ENCODE measurements at regions of chr15 and their contacts with region 1.

Region 1: GRCh38 chr15:36883713-36884517 is 216.4 kb downstream of the MEIS2 start:
- H3K4me3 ChIP-seq: no peak overlapping the region; the same call in 1 of the 2 replicates
- H3K27ac ChIP-seq: no peak overlapping the region
- H3K4me1 ChIP-seq: no peaks in the 10 kb centered on the region
- CTCF ChIP-seq: peak; percentile 68

Region 2: GRCh38 chr15:37134699-37135131 is 250.8 kb after region 1 on chr15:
- CTCF ChIA-PET with region 1: interaction called, 13 read pairs
- POLR2A ChIA-PET with region 1: no interaction called
- H3K4me3 ChIP-seq: no peak overlapping the region
- H3K27ac ChIP-seq: no peak overlapping the region
- H3K4me1 ChIP-seq: no peaks in the 10 kb centered on the region
- CTCF ChIP-seq: 0 out of 2 replicates have a peak, but pooled peaks have one; percentile 25

Measured in HEK293 (cell line).